Right ventricle myocardium inferior (tissue), 1 donor: ENCODE measurements at regions of chr1 and their contacts with region 1.

Region 1: DNA sequence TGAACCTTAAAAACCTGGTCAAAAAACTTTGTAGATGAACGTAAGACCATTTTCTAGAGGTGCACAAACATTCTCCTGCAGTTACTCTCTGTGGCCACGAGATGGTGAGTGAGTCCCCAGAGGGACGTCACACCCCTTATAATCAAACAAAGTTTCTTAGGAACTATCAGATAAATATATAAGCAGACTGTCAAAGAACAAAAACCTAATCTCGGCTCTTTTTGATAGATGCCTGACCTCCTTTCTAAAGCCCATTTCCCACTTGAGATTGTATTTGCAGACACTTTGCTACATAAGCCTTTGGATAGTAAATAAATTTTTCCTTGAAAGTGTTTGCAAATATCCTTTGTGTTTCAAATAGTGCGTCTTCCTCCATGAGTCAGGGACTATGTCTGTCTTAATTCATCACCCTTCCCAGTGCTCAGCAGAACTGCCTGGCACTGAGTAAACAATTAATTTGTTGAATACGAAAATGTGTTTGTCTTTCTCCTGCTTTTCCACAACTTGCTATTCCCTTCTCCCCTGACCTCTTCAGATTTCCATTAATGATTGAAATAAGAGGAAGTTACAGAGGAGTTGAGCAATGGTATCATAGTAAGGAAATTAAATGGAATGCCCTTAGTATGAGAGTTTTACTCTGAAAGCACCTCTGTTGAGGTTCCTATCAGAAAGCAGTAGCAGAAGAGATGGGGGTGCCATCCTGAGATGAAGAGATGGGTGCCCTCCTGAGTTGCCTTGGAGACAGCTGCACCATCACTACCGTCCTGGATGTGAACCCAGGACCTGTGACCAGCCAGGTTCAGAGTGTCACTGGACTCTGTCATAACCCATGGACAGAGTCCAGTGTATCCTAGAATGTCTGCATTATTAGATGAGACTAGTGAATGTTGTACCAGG is 57.8 kb upstream of the RAVER2 start:
- DNase-seq: no peak
- ATAC-seq: peak; percentile 54

Region 2: DNA sequence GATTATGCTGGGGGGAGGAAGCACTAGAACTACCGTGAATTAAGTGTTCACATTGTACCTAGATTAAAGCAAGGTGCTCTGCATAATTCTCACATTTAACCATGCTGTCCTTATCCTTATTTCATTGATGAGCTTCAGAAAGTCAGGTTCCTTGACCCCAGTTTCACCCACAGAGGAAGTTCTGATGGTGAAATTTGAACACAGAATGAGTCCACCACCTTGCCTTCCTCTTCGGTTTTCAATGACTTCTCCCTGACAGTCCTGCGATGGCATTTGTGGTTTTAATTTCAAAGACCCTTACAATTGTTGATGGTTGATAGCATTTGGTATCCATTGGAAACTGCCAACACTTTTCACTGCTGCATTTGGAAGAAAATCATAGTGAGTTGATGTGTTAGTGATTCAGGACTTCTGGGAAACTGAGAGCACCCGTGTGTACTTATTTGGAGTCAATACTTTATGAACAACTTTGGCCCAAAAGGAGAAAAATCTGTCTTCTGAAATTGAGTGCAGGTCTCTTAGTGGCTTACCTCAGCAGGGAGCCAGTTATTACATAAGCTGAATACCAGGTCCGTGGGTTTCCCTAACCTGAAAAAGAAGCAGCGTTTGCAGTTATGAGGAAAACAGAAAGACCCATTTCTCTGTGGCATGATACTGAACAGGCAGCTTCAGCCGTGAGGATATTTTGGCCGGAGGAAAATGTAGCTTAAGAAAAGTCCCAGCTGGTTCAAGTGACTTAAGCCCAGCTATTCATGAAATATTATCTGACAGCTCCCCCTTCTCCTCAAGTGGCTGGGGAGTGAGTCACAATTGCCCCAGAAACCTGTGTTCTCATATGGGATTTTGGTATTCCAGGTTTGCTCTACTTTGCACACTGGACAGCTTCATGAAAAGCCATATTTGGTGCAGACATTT is 865.7 kb before region 1 on chr1:
- intact Hi-C with region 1: no loop called
- DNase-seq: no peak
- ATAC-seq: peak; percentile 74

Region 3: GRCh38 chr1:64701886-64702285 is 14.8 kb after region 1 on chr1:
- intact Hi-C with region 1: loop called (anchors 1 kb)
- DNase-seq: no peak
- ATAC-seq: peak; percentile 87

Region 4: GRCh38 chr1:64744492-64745180 is 57.6 kb after region 1 on chr1 and contains the start of gene RAVER2:
- intact Hi-C with region 1: loop called (anchors 5 kb)
- DNase-seq: peak; percentile 87
- ATAC-seq: peak; percentile 89
- total RNA-seq, gene RAVER2: 30.1 TPM

Region 5: GRCh38 chr1:64846573-64847430 is 159.7 kb after region 1 on chr1:
- intact Hi-C with region 1: no loop called
- DNase-seq: no peak
- ATAC-seq: no peak

Region 6: GRCh38 chr1:64933296-64934070 is 246.4 kb after region 1 on chr1:
- intact Hi-C with region 1: no loop called
- DNase-seq: peak; percentile 61
- ATAC-seq: peak; percentile 84

Region 7: GRCh38 chr1:65687428-65688214 is 1000.5 kb after region 1 on chr1:
- intact Hi-C with region 1: loop called (anchors 10 kb)
- DNase-seq: peak; percentile 88
- ATAC-seq: peak; percentile 76